Activated naive CD8-positive, alpha-beta T cell treated with anti-CD3 and anti-CD28 coated beads, Interleukin-2, amount 10 ng/mL, durations not matched to agents 7 days and 5 days (primary cell): ENCODE measurements at regions of chr3 and their contacts with region 1.

Region 1: DNA sequence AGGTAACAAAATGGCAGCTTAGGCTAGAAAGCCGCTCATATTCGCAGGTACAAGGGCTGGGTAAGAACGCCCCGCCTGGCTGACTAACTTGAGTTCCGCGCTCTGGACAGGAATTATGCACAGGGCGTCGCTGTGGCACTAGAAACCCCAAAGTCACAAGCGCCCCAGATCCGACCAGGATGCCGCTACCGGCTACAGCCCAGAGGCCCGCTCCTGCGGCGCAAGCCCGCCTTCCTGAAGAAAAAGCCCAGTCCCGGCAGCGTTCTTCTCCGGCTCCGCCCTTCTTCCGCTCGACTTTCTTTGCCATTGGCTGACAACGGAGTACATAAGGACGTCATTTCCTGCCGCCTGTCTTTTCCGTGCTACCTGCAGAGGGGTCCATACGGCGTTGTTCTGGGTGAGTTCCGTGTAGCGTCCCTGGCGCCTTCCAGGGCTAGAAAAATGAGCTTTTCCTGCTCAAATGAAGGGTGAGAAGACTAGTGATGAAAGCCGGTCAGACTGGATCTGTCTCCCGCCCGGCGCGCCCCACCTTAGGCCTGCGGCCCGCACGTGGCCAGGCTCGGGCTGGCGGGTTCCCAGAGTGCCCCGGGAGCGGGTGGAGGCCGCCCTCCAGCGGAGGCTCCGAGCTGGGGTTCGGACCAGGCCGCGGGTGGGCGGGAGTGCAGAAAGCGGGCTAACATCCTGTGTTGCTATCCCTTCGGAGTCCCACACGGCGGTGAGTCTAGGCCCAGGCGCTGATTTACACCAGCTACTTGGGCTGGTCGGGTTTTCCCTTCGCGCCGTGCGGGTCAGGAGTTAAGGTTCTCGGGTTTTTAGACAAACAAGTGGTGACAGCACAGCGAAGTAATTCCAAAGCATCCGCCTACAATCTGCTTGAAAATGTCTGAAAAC is at the start of gene RPSA:
- DNase-seq: peak; percentile 90
- ATAC-seq: peak; percentile 93
- H3K4me3 Mint-ChIP-seq: peak within 1 kb of the TSS; percentile 96
- H3K27ac Mint-ChIP-seq: peak within 1 kb of the TSS; percentile 92
- H3K4me1 Mint-ChIP-seq: peaks cover 48% of the 10 kb centered on the region
- H3K27me3 Mint-ChIP-seq: no peaks in the 10 kb centered on the region
- total RNA-seq, gene RPSA: 1,282 to 1,296 TPM

Region 2: DNA sequence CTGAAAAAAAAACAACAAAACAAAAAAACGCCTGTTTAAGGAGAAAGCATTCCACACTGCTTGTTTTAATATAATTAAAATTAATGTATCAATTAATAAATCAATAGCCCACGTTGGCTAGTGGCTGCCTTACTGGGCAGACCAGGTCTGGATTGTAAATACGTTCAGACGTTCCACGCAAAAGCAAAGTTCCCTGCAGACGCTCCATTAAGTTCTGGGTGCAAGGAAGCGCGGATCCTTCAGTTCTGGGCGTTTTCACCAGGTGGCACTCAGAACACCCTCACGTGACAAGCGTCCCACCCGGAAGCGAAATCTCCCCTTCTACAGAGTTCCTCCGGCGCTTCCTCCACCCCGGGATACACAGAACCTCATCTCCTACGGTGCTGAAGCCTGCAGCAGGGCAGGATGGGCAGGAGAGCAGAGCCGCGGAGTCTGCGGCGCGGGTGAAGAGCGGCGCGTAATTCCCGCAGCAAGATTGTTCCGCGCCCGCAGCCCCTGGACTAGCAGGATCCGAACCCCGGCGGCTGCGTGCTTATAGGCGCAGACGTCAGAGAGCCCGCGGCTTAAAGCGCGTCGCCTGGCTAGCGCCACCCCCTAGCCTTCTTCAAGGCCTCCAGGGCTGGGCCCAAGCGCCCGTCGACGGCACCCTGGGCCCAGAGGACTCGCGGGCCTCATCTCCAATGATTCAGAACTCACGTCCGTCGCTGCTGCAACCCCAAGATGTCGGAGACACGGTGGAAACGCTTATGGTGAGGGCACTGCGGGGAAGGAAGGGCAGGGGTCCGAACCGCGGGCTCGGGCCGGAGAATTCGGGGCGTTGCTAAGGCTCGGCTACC is 23.4 kb before region 1 on chr3 and contains the start of gene SLC25A38:
- POLR2A ChIA-PET with region 1: interaction called, 42 read pairs
- DNase-seq: peak; percentile 84
- ATAC-seq: peak; percentile 83
- H3K4me3 Mint-ChIP-seq: peak within 1 kb of the TSS; percentile 98
- H3K27ac Mint-ChIP-seq: peak within 1 kb of the TSS; percentile 99
- H3K4me1 Mint-ChIP-seq: peaks cover 37% of the 10 kb centered on the region
- H3K27me3 Mint-ChIP-seq: no peaks in the 10 kb centered on the region
- total RNA-seq, gene SLC25A38: 46.0 to 46.1 TPM

Region 3: DNA sequence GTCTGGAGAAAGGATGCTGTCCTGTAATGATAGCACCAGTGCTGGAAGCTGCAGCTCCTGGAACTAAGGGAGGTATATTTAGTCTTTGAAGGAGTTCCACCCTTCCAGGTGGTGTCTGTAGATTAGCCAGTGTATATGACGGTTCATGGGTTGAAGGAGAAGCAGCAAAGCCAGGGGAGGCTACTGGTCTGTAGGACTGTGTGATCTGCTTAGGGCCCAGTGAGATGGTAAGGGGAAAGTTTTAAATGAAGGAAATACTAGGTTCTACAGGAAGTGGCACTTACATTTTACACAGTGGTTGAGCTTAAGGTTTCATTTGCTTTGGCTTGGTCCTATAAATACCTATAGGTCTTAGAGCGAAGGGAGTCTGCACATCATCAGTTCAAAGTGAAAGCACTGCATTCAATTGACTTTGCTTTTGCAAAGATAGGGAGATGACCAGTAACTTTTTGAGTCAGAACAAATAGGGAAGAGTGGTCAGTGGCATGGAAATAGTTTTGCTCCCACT is 17.8 kb before region 1 on chr3:
- POLR2A ChIA-PET with region 1: interaction called, 42 read pairs
- DNase-seq: no peak
- ATAC-seq: peak; percentile 51
- H3K4me3 Mint-ChIP-seq: peak overlapping the region; percentile 75
- H3K27ac Mint-ChIP-seq: peak overlapping the region; percentile 92
- H3K4me1 Mint-ChIP-seq: peaks cover 57% of the 10 kb centered on the region
- H3K27me3 Mint-ChIP-seq: no peaks in the 10 kb centered on the region